Activated naive CD4-positive, alpha-beta T cell treated with anti-CD3 and anti-CD28 coated beads for 36 hours (primary cell): ENCODE measurements at regions of chr11 and their contacts with region 1.

Region 1: DNA sequence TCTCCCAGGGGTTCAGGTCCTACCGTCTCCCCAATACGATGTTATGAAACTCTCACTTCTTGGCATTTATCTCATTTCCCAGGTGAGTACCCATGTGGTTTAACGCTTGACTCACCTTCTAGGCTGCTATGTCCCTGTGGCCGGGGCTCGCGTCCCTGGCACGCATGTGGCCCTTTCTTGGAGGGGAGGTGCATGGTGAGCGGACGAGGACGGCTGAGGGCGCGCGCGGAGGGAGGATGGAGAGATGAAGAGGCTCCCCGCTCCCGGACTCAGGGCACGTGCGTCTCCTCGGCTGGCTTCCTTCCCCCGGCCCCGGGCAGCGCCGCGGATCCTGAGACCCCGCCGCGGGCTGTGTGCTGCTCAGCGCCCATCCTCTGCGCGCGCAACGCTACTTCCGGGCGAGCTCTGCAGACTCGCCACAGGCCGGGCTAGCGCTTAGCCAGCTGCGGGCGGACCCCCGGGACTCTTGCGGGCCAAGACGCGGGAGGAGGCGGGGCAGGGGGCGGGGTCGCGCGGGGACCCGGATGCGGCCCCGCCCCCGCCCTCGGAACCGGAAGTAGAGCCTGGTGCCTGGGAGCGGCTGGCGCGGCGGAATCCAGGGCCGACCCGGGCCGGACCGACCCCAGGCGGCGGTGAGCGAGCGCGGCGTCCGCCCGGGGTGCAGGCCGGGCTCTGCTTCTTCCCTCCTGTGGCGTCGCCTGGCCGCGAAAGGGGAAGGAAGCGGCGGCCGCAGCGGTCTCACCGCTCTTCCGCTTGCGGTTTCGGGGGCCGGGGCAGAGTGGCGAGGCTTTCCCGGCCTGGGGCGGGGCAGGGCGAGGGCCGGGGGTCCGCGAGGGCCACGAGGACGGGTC is at the start of gene CTTN:
- DNase-seq: peak; percentile 71
- H3K4me3 Mint-ChIP-seq: peak within 1 kb of the TSS; percentile 80
- H3K27ac Mint-ChIP-seq: peak within 1 kb of the TSS; percentile 77
- H3K4me1 Mint-ChIP-seq: peaks cover 37% of the 10 kb centered on the region
- H3K27me3 Mint-ChIP-seq: peaks cover 7% of the 10 kb centered on the region
- total RNA-seq, gene CTTN: 44.8 to 52.7 TPM

Region 2: DNA sequence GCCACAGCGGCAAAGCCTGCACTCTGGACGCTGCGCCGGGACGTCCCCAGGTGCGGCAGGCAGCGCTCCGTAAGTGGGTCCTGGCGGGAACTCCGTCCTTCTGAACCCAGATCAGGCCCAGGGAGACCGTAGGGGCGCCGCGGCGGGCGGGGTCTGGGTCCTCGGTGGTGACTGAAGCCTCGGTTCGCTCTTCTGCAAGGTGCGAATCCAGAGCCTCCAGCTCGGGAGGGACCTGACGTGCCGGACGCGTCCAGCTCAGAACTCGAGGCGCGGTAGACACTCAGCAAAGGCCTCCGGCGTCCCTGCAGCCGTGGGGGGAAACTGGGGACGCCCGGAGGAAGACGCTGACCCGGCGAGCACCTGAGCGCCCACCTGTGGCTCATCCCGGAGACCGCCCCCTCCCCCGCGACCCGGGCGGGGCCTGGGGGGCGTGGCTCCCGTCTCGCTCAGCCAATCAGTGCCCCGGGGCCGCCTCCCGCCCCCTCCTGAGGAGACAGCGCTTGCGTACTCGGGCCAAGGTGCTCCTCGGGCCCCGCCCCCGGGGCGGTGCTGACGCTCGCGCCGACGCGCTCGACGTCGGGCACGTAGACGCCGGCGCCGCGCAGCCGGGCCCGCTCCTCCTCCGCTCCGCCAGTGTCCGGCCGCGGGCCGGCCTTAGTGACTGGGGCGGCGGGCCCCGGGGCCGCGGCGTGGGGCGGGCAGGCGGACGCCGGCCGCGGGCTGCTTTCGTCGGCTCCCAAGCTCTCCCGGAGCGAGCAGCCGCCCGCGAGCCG is 127.9 kb before region 1 on chr11 and contains the start of gene PPFIA1:
- CTCF ChIA-PET with region 1: no interaction called
- intact Hi-C with region 1: loop called (anchors 2 kb)
- DNase-seq: peak; percentile 94
- H3K4me3 Mint-ChIP-seq: peak within 1 kb of the TSS; percentile 87
- H3K27ac Mint-ChIP-seq: peak within 1 kb of the TSS; percentile 36
- H3K4me1 Mint-ChIP-seq: peaks cover 38% of the 10 kb centered on the region
- H3K27me3 Mint-ChIP-seq: peaks cover 10% of the 10 kb centered on the region
- total RNA-seq, gene PPFIA1: 15.9 to 21.7 TPM

Region 3: DNA sequence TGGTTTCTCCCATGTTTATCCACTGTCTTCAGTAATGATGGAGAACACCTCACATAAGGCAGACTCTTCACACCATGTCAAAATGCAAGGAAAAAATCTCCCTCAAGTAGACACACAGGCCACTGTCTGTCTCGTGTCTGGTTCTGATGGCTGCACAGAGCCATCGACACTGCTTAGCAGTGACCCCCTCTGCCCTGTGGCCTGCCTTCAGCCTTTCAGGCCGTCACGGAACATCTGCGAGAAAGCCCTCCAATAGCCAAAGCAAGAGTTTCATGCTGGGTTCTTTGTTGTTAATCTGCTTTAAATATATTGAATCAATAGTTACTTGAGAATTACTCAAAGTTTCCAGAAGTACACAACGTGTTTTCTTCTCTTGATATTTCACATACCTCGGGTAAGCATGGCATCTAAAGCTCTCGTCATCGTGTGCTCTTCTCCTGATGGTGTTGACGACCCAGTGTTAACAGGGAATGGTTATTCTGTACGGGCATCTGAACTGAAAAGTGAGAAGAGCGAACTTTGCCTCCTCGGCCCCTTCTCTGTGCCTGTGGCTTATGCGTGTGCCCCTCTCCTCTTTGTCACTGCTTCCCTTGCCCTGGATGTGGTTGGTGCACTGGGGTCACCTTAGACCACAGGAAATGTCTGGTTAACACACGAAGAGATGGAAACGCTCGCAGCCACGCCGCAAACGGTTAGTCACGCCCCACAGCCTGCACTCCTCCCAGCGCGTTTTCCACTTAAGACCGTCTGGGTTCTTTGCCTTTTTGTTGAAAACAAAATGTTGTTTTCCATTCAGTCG is 33.3 kb before region 1 on chr11:
- CTCF ChIA-PET with region 1: interaction called, 3 read pairs
- intact Hi-C with region 1: loop called (anchors 1 kb)
- DNase-seq: peak; percentile 82
- H3K4me3 Mint-ChIP-seq: peak overlapping the region; percentile 53
- H3K27ac Mint-ChIP-seq: peak overlapping the region; percentile 67
- H3K4me1 Mint-ChIP-seq: peaks cover 28% of the 10 kb centered on the region
- H3K27me3 Mint-ChIP-seq: no peaks in the 10 kb centered on the region